ENCODE measurements at regions of chr20 and their contacts with region 1.

Region 1: DNA sequence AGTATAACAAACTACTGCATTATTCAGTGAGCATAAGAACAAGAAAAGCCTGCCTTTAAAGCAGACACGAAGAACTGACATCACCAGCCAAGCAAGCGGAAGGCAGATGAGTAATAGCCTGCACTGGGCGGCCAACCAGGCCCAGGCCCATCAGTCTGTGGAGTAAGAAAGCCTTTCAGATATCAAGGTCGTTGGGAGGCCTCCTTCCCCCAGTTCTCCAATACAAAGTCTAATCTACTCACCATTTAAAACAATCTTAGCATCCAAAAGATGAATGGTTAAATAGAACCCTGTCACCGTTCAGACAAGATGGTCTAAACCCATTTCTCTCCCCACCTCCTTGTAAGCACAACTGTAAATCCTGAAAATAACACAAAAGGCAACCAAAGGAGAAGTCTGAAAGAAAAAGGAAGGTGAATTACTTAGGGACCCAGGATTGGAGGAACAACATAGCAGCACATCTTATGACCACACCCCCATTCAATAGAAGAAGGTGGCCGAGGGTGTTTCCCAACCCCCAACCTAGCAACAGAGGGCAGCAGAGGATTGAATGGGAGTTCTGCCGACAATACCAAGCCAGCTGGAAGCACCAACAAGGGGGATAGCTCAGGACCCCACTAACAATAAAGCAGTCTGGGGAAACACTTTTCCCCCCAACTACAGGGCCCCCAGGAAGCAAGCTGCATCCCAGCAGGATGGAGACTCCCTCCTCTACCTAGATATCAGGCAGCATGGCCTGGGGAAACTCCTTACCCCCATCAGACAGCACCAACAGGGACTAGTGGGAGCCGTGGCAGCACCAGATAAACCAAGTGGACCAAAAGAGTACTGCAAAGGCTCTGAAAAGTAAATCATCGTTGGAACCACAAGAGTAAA is 67.9 kb downstream of the ZHX3 start:
- DNase-seq: peak; percentile 35 to 92 (median 50)
- H3K4me3 ChIP-seq: peak overlapping the region in 2 of 3 donors; percentile 10 to 16
- H3K27ac ChIP-seq: peak overlapping the region; percentile 86 to 97
- H3K4me1 ChIP-seq: peaks cover 0 to 50% (median 40%) of the 10 kb centered on the region in 3 donors
- H3K27me3 ChIP-seq: no peaks in the 10 kb centered on the region
- CTCF ChIP-seq: peak; percentile 13

Region 2: GRCh38 chr20:41317536-41318270 is 68.1 kb after region 1 on chr20 and contains the start of gene ZHX3:
- intact Hi-C with region 1: loop called (anchors 10 kb)
- DNase-seq: peak; percentile 98 to 99 (median 99)
- H3K4me3 ChIP-seq: peak within 1 kb of the TSS; percentile 81 to 92 (median 81)
- H3K27ac ChIP-seq: peak within 1 kb of the TSS; percentile 90
- H3K4me1 ChIP-seq: peaks cover 0 to 11% (median 6%) of the 10 kb centered on the region in 3 donors
- H3K27me3 ChIP-seq: no peaks in the 10 kb centered on the region
- CTCF ChIP-seq: no peak
- total RNA-seq, gene ZHX3: 153 TPM